ENCODE measurements at regions of chr12 and their contacts with region 1.

Region 1: DNA sequence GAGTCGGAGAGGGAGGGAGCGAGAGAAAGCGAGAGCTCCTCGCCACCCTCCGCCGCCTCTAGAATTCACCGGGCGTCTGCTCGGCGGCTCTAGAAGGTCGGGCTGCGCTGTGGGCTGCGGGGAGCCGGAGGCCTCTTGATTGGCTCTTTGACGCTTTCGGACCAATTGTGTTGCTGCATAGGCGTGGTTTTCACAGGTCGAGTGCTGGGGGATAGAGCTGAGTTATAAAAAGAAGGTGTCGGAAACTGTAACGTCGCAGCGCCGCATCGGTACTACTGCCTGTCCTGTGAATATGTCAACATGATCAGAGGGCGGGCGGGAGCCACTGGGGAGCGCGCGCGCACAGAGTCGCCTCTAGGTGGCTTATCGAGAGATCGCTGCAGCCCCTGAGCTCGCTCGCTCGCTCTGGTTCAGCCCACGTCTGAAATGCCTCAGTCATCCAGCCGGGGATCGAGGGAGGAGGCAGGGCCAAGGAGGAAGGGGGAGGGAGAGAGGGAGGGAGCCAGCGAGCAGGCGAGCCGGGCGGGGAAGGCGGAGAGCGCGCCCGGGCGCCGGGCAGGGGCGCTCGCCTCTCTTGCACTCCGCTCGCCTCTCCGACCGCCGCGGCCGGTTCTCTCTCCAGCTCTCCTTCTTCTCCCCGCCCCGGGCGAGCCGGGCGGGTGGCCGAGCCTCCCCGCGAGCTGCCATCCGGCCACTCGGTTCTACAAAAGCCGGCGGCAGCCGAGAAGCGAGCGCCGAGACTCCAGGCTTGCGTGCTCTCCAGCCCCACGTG is at the start of gene TBX3:
- DNase-seq: peak; percentile 95 to 99 (median 98)
- H3K4me3 ChIP-seq: peak within 1 kb of the TSS; percentile 74 to 90 (median 84)
- H3K27ac ChIP-seq: peak within 1 kb of the TSS; percentile 93 to 99 (median 97)
- H3K4me1 ChIP-seq: peaks cover 5 to 11% of the 10 kb centered on the region in 2 donors
- H3K27me3 ChIP-seq: no peaks in the 10 kb centered on the region
- CTCF ChIP-seq: peak; percentile 58 to 89 (median 78)
- POLR2A ChIP-seq: peak; percentile 92 to 97
- total RNA-seq, gene TBX3: 156 to 602 (median 393) TPM

Region 2: DNA sequence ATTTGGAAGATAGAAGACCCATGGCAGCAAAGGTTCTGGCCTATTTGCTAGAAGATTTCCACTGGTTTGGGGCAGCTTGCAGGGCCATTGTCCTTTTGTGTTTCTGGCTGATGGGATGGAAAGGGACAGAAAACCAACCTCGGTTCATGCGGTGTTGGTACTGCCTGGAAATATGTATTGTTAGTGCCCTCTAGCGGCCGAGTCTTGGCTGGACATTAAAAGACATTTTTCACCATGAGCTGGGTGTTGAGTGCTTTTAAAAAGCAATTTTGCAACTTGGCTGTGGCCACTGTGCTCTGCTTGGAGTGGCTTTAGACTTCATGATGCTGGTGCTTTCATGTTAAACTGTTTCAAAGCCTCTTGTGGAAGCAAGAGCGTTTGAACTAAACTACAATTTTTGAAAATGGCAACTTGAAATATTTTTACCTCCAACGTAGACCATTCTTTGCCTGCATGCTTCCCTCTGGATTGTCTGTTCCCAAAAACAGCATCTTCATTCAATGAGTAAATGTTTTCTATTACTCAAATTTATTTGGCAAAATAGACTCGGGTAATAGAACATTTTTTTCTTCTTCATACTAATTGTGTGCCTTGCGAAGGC is 175.7 kb before region 1 on chr12:
- intact Hi-C with region 1: no loop called
- DNase-seq: peak; percentile 58 to 91 (median 75)
- H3K4me3 ChIP-seq: no peak overlapping the region
- H3K27ac ChIP-seq: no peak overlapping the region
- H3K4me1 ChIP-seq: no peaks in the 10 kb centered on the region
- H3K27me3 ChIP-seq: peaks cover 6% of the 10 kb centered on the region
- CTCF ChIP-seq: peak; percentile 63 to 82 (median 72)
- POLR2A ChIP-seq: no peak

Region 3: DNA sequence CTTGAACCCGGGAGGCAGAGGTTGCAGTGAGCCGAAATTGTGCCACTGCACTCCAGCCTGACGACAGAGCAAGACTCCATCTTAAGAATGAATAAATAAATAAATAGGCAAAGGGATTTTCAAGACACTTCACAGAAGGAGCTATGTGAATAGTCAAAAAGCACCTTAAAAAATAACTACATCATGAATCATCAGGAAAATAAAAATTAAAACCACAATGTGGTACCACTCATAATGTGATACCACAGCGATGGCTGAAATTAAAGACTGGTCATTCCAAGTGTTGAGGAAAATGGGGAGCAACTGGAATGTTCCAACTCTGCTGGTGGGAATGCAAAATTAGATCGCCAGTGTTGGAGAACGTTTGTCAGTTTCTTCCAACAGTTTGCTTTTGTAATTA is 92.8 kb after region 1 on chr12:
- intact Hi-C with region 1: loop called in 1 of 2 experiments (anchors 10 kb)
- DNase-seq: no peak
- H3K4me3 ChIP-seq: no peak overlapping the region
- H3K27ac ChIP-seq: no peak overlapping the region
- H3K4me1 ChIP-seq: peaks cover 11 to 19% of the 10 kb centered on the region in 2 donors
- H3K27me3 ChIP-seq: no peaks in the 10 kb centered on the region
- CTCF ChIP-seq: no peak
- POLR2A ChIP-seq: no peak

Measured in adrenal gland (tissue), 19 donors.